ENCODE measurements at regions of chr2 and their contacts with region 1.

Region 1: DNA sequence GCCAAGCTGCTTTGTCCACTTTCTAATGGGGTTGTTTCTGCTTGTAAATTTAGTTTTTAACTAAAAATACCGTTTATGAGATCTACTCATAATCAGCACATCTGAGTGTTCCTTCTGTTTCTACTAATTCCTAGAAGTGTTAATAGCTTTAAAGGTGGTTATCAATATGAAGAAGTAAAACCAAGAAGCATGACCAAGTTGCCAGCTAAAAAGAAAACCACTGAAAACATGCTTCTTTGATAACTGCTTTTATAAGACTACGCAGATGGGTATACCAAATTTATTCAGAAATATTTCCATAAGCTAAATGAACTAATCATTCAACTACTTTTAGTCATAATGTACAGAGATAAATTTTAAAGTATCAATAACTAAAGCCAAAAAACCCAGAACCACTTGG is 101.8 kb downstream of the C2orf74 start:
- DNase-seq: no peak
- ATAC-seq: no peak
- H3K4me3 ChIP-seq: no peak overlapping the region
- H3K27ac ChIP-seq: no peak overlapping the region
- H3K4me1 ChIP-seq: no peaks in the 10 kb centered on the region
- H3K27me3 ChIP-seq: no peaks in the 10 kb centered on the region
- CTCF ChIP-seq: no peak
- POLR2A ChIP-seq: no peak
- RAD21 ChIP-seq: no peak

Region 2: DNA sequence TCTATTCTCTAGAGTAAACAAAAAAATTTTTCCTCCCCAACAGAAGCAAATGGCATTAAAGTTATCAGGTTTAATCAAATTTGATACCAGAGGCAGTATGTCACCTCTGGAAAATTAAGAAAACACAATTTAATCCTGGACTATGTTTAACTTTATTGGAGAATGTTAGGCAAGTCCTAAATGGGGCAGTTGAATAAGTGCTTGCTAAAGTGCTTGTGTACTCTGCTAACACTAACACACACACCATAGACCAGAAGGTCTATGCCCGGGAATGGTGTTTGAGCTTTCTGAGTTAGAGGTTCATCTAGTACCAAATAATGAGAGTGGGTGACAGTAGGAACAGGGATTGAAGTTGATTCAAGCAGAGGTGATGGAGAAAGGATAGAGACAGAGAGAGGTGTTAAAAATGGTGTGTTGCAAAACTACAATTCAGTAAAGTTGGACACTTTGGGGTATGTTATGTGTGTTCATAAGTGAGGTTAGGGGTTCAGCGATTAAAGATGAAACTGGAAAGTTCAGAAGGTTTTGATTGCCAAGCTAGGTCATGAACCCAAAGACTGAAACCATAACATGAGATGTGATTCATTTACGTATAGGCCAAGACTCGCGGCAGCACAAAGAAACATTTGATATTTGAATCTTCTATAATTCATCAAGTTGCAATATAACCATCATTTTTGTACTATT is 286.8 kb before region 1 on chr2:
- CTCF ChIA-PET with region 1: no interaction called
- POLR2A ChIA-PET with region 1: no interaction called
- RAD21 ChIA-PET with region 1: no interaction called
- intact Hi-C with region 1: no loop called
- DNase-seq: no peak
- ATAC-seq: no peak
- H3K4me3 ChIP-seq: no peak overlapping the region
- H3K27ac ChIP-seq: no peak overlapping the region
- H3K4me1 ChIP-seq: no peaks in the 10 kb centered on the region
- H3K27me3 ChIP-seq: no peaks in the 10 kb centered on the region
- CTCF ChIP-seq: no peak
- POLR2A ChIP-seq: no peak
- RAD21 ChIP-seq: no peak

Region 3: DNA sequence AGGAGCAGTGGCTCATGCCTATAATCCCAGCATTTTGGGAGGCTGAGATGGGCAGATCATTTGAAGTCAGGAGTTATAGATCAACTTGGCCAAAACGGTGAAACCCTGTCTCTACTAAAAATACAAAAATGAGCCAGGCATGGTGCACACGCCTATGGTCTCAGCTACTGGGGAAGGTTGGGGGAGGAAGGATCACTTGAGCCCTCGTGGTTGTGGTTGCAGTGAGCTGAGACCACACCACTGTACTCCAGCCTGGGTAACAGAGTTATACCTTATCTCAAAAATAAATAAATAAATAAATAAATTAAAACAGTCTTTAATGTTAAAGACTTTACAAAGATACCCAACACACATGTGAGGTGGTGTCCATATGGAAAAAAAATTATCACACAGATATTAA is 32.2 kb after region 1 on chr2:
- CTCF ChIA-PET with region 1: no interaction called
- POLR2A ChIA-PET with region 1: no interaction called
- RAD21 ChIA-PET with region 1: no interaction called
- intact Hi-C with region 1: loop called (anchors 2 kb)
- DNase-seq: no peak
- ATAC-seq: no peak
- H3K4me3 ChIP-seq: no peak overlapping the region
- H3K27ac ChIP-seq: no peak overlapping the region
- H3K4me1 ChIP-seq: no peaks in the 10 kb centered on the region
- H3K27me3 ChIP-seq: no peaks in the 10 kb centered on the region
- CTCF ChIP-seq: no peak
- POLR2A ChIP-seq: no peak
- RAD21 ChIP-seq: no peak

Measured in HCT116 (cell line).